Activated CD8-positive, alpha-beta T cell treated with anti-CD3 and anti-CD28 coated beads for 36 hours (primary cell): ENCODE measurements at regions of chr11 and their contacts with region 1.

Region 1: DNA sequence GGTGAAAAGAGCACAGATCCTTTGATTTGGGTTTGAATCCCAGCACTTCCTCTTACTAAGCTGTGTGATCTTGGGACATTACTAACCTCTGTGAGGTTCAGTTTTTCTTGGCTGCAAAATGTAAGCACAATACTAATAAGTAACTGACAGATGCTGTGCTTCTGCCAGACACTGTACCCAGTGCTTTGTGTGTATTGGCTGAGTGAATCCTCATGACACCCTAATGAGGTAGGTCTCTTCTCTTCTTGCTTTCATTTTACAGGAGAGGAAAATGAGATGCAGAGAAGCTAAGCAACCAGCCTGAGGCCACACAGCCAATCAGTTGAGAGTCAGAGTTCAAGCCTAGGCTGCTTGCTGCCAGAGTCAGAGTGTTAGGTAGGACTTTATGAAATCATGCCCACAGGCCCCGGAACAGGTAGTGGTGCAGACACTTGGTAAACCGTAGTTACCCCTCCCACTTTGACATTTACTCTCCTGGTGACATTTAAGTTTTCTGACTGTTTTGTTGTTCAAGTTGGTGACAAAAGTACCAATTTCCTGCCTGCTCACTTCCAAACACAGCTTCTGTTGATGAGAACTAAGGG is 21.2 kb downstream of the PTPRJ start:
- DNase-seq: peak; percentile 93
- ATAC-seq: peak; percentile 86
- H3K4me3 Mint-ChIP-seq: peak overlapping the region; percentile 55
- H3K27ac Mint-ChIP-seq: peak overlapping the region; percentile 99
- H3K4me1 Mint-ChIP-seq: peaks cover 78% of the 10 kb centered on the region
- H3K27me3 Mint-ChIP-seq: no peaks in the 10 kb centered on the region
- CTCF ChIP-seq: no peak

Region 2: DNA sequence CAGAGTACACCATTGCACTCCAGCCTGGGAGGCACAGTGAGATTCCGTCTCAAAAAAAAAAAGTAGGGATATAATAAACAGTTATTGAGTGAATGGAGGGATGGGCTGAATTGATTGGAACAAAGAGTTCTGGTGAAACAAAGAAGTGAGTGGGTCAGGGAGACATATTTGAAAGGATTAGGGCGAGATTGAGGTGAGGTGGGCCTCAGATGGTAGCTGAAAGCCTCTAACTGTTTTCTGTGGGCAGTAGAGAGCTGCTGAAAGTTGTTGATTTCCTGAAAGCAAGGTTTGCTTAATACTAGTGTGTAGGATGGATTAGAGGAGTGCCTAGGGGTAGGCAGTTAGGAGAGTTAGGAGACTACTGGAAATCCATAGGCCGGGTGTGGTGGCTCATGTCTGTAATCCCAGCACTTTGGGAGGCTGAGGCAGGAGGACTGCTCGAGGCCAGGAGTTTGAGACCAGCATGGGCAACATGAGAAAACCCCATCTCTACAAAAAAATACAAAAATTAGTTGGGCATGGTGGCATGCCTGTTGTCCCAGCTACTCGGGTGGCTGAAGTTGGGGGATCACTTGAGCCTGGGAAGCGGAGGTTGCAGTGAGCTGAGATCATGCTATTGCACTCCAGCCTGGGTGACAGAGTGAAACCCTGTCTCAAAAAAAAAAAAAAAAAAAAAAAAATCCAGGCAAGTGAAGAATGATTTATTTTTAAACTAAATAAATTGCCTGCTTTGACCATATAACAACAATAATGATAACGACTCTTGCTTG is 62.6 kb before region 1 on chr11:
- CTCF ChIA-PET with region 1: interaction called, 11 read pairs
- POLR2A ChIA-PET with region 1: interaction called, 3 read pairs
- intact Hi-C with region 1: loop called (anchors 5 kb)
- DNase-seq: no peak
- ATAC-seq: no peak
- H3K4me3 Mint-ChIP-seq: no peak overlapping the region
- H3K27ac Mint-ChIP-seq: no peak overlapping the region
- H3K4me1 Mint-ChIP-seq: peaks cover 16% of the 10 kb centered on the region
- H3K27me3 Mint-ChIP-seq: no peaks in the 10 kb centered on the region
- CTCF ChIP-seq: no peak

Region 3: GRCh38 chr11:47946682-47947575 is 54.6 kb before region 1 on chr11:
- CTCF ChIA-PET with region 1: no interaction called
- POLR2A ChIA-PET with region 1: interaction called, 3 read pairs
- intact Hi-C with region 1: loop called (anchors 5 kb)
- DNase-seq: peak; percentile 49
- ATAC-seq: peak; percentile 28
- H3K4me3 Mint-ChIP-seq: no peak overlapping the region
- H3K27ac Mint-ChIP-seq: peak overlapping the region; percentile 7
- H3K4me1 Mint-ChIP-seq: peaks cover 33% of the 10 kb centered on the region
- H3K27me3 Mint-ChIP-seq: no peaks in the 10 kb centered on the region
- CTCF ChIP-seq: no peak

Region 4: GRCh38 chr11:47983464-47984397 is 17.8 kb before region 1 on chr11:
- CTCF ChIA-PET with region 1: interaction called, 7 read pairs
- POLR2A ChIA-PET with region 1: interaction called, 7 read pairs
- intact Hi-C with region 1: loop called (anchors 2 kb)
- DNase-seq: no peak
- ATAC-seq: no peak
- H3K4me3 Mint-ChIP-seq: peak overlapping the region; percentile 67
- H3K27ac Mint-ChIP-seq: peak overlapping the region; percentile 84
- H3K4me1 Mint-ChIP-seq: peaks cover 49% of the 10 kb centered on the region
- H3K27me3 Mint-ChIP-seq: no peaks in the 10 kb centered on the region
- CTCF ChIP-seq: no peak

Region 5: GRCh38 chr11:48013269-48013901 is 11.9 kb after region 1 on chr11:
- CTCF ChIA-PET with region 1: interaction called, 12 read pairs
- POLR2A ChIA-PET with region 1: interaction called, 25 read pairs
- intact Hi-C with region 1: no loop called
- DNase-seq: peak; percentile 85
- ATAC-seq: peak; percentile 38
- H3K4me3 Mint-ChIP-seq: peak overlapping the region; percentile 38
- H3K27ac Mint-ChIP-seq: peak overlapping the region; percentile 97
- H3K4me1 Mint-ChIP-seq: peaks cover 86% of the 10 kb centered on the region
- H3K27me3 Mint-ChIP-seq: no peaks in the 10 kb centered on the region
- CTCF ChIP-seq: no peak

Region 6: DNA sequence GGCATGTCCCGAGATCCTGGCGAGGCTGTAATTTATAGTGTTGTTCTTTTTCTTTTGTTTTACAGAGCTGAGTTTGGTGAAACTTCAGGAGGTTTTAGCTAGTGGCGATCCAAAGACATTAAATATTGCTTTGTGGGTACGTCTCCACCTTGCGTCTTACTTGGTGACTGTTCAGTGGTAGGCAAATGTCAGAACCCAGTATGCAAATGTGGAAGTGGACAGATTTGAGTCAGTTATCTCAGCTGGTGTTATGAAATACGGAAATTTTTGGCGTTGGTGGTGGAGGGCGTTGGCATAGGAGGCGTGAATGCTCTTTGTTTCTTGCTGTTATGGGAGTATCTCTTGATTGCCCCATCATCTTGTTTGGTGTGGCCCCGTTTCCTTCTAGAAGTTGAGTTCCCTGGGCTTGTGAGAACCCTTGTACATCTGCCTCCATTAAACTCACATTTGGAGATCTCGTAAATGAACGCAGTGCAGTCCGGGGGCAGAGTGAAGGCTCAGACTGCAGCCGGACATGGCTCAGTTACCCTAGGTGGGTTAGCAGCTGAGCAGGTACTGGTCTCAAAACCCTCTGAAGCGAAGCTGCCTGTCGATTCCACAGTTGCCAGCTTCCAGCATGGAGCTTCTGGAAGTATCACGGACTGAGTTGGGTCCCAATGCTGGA is 18.7 kb after region 1 on chr11:
- CTCF ChIA-PET with region 1: interaction called, 12 read pairs
- POLR2A ChIA-PET with region 1: interaction called, 25 read pairs
- intact Hi-C with region 1: no loop called
- DNase-seq: peak; percentile 73
- ATAC-seq: peak; percentile 50
- H3K4me3 Mint-ChIP-seq: peak overlapping the region; percentile 4
- H3K27ac Mint-ChIP-seq: peak overlapping the region; percentile 73
- H3K4me1 Mint-ChIP-seq: peaks cover 57% of the 10 kb centered on the region
- H3K27me3 Mint-ChIP-seq: no peaks in the 10 kb centered on the region
- CTCF ChIP-seq: no peak

Region 7: DNA sequence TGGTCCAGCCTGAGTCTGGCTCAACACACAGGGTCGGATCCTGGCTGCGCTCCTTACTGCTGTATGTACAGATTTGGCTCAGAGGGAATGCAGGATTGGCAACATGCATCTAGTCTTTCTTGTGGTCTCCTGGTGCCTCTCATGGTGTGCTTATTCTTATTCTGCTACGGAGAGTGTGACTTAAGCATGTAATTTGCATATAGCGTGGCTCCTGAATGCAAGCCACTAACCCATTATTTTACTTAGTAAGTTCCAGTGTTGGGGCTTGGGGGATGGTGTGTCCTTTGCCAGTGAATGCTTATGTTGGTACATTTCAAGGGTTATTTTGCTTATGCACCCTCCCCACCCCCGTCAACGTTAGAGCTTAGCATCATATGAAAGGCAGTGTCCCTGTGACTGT is 30.1 kb after region 1 on chr11:
- CTCF ChIA-PET with region 1: no interaction called
- POLR2A ChIA-PET with region 1: no interaction called
- intact Hi-C with region 1: no loop called
- DNase-seq: no peak
- ATAC-seq: peak; percentile 55
- H3K4me3 Mint-ChIP-seq: no peak overlapping the region
- H3K27ac Mint-ChIP-seq: peak overlapping the region; percentile 24
- H3K4me1 Mint-ChIP-seq: peaks cover 70% of the 10 kb centered on the region
- H3K27me3 Mint-ChIP-seq: no peaks in the 10 kb centered on the region
- CTCF ChIP-seq: no peak

Region 8: DNA sequence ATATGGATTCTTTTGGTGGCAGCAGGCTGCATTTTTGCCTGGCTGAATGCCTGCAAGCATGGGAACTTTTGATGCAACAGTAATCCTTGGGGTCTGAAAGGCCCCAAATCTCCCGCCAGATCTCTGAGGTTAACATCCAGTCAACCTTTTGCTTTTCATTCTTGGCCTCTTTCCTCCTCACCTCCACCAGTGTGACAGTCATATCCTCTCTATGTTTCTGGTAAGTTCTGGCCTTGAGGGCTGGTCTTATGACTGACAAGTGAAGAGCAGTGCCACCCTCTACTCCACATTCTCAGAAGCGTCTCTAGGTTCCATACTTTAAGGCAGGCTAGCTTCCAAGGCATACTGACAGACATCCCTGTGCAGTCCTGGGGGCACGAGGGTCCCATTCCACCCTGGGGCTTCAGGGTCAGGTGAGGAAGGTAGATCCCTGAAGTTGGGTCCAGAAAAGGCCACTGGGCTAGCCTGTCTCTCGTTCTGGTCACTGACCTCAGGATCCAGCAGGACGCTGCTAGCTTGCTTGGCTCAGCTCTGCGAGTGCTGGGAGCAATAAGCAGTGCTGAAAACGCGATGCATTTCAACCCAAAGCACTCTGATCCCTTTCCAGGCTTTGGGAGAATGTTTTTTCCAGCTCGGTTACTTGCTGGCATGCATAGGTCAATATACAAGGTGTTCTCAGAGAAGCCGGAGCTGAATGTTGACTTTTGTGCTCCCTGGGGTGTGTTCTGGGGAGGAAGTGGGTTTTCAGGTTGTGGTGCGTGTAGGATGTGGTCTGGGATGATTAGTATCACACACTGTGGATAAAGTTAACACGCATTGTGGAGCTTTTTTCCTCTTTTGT is 54.0 kb after region 1 on chr11:
- CTCF ChIA-PET with region 1: interaction called, 9 read pairs
- POLR2A ChIA-PET with region 1: interaction called, 44 read pairs
- intact Hi-C with region 1: loop called (anchors 5 kb)
- DNase-seq: peak; percentile 84
- ATAC-seq: peak; percentile 93
- H3K4me3 Mint-ChIP-seq: peak overlapping the region; percentile 51
- H3K27ac Mint-ChIP-seq: peak overlapping the region; percentile 87
- H3K4me1 Mint-ChIP-seq: peaks cover 70% of the 10 kb centered on the region
- H3K27me3 Mint-ChIP-seq: no peaks in the 10 kb centered on the region
- CTCF ChIP-seq: no peak